WTC11 (cell line): ENCODE measurements at regions of chr2 and their contacts with region 1.

Region 1: DNA sequence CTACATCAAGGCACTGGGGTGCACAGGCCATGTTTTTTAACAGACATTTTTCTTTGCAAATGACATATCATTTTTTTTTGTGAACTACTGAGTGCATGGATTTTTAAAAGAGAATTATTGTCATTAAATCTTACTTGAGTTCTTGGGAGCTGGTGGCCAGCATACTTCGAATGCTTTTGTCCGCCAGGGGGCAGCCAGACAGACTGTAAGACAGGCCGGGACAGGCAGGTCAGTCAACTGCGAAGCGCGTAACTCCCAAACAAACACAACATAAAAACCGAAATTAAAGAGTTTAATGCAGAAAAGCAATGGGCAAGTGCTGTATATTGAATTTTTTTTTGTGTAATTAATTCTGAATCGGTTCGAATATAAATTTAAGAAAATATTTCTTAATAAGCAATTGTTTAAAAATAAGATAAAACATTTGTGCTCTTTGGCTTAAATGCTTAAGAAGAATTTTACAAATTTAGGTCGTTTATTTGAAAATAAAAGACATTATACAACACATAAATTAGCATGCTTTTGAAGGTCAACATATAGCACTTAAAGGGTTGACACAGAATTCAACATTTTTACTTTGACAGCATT is 142.2 kb upstream of the PXDN start:
- DNase-seq: peak; percentile 83
- ATAC-seq: peak; percentile 61
- H3K4me3 Mint-ChIP-seq: no peak overlapping the region
- H3K27ac Mint-ChIP-seq: no peak overlapping the region
- H3K4me1 Mint-ChIP-seq: peaks cover 6% of the 10 kb centered on the region; the same call in 1 of the 2 replicates
- H3K27me3 Mint-ChIP-seq: no peaks in the 10 kb centered on the region
- CTCF ChIP-seq: peak; percentile 76

Region 2: DNA sequence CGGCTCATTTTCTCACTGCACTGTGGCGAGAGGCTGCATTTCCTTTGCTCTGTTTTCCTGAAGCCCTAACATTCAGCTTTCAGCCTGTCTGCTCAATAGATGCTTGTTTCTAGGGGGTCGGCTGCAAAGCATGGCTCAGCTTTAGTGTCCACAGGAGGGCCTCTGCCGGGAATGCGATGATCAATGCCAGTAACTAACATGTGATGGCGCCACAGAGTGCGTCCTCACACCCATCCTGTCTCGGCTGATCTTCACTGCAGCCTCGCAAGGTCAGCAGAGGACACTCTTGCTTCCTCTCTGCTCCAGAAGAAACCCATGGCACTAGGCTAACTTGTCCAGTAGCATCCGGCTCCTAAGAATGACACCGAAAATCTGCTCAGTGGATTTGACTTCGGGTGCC is 14.2 kb after region 1 on chr2:
- CTCF ChIA-PET with region 1: interaction called, 18 read pairs
- POLR2A ChIA-PET with region 1: no interaction called
- DNase-seq: peak; percentile 73
- ATAC-seq: peak; percentile 97
- H3K4me3 Mint-ChIP-seq: no peak overlapping the region
- H3K27ac Mint-ChIP-seq: no peak overlapping the region
- H3K4me1 Mint-ChIP-seq: peaks cover 3% of the 10 kb centered on the region; the same call in 1 of the 2 replicates
- H3K27me3 Mint-ChIP-seq: no peaks in the 10 kb centered on the region
- CTCF ChIP-seq: peak; percentile 49; the same call in 1 of the 2 replicates

Region 3: GRCh38 chr2:1910592-1911246 is 24.2 kb after region 1 on chr2:
- CTCF ChIA-PET with region 1: interaction called, 11 read pairs
- POLR2A ChIA-PET with region 1: no interaction called
- DNase-seq: no peak
- ATAC-seq: peak; percentile 62
- H3K4me3 Mint-ChIP-seq: no peak overlapping the region
- H3K27ac Mint-ChIP-seq: no peak overlapping the region
- H3K4me1 Mint-ChIP-seq: peaks cover 13% of the 10 kb centered on the region
- H3K27me3 Mint-ChIP-seq: no peaks in the 10 kb centered on the region
- CTCF ChIP-seq: no peak

Region 4: DNA sequence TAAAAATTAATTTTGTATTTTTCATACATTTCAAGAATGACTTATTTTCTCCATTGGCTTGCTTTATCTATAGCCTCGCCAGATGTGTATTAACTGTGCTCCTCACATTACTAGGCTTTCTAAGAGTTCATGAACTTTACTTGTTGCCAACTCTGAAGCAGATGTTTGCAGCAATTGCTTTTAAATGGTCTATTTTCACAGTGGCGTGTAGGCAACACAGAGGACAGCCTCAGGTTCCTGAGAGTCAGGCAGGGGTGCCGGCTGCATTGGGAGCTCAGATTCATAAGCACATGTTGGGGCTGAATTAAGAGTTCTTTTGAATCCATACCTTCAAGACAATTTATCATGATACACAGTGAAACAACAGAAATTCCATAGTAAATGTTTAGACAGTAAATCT is 37.0 kb after region 1 on chr2:
- CTCF ChIA-PET with region 1: no interaction called
- POLR2A ChIA-PET with region 1: no interaction called
- DNase-seq: no peak
- ATAC-seq: no peak
- H3K4me3 Mint-ChIP-seq: no peak overlapping the region
- H3K27ac Mint-ChIP-seq: no peak overlapping the region
- H3K4me1 Mint-ChIP-seq: peaks cover 11% of the 10 kb centered on the region
- H3K27me3 Mint-ChIP-seq: no peaks in the 10 kb centered on the region; the same call in 1 of the 2 replicates
- CTCF ChIP-seq: no peak

Region 5: GRCh38 chr2:2328848-2329247 is 442.3 kb after region 1 on chr2:
- CTCF ChIA-PET with region 1: no interaction called
- POLR2A ChIA-PET with region 1: no interaction called
- DNase-seq: peak; percentile 72
- ATAC-seq: peak; percentile 34
- H3K4me3 Mint-ChIP-seq: no peak overlapping the region
- H3K27ac Mint-ChIP-seq: no peak overlapping the region
- H3K4me1 Mint-ChIP-seq: peaks cover 58% of the 10 kb centered on the region
- H3K27me3 Mint-ChIP-seq: peaks cover 9% of the 10 kb centered on the region
- CTCF ChIP-seq: no peak